Psoas muscle (tissue), 8 donors: ENCODE measurements at regions of chr2 and their contacts with region 1.

Region 1: DNA sequence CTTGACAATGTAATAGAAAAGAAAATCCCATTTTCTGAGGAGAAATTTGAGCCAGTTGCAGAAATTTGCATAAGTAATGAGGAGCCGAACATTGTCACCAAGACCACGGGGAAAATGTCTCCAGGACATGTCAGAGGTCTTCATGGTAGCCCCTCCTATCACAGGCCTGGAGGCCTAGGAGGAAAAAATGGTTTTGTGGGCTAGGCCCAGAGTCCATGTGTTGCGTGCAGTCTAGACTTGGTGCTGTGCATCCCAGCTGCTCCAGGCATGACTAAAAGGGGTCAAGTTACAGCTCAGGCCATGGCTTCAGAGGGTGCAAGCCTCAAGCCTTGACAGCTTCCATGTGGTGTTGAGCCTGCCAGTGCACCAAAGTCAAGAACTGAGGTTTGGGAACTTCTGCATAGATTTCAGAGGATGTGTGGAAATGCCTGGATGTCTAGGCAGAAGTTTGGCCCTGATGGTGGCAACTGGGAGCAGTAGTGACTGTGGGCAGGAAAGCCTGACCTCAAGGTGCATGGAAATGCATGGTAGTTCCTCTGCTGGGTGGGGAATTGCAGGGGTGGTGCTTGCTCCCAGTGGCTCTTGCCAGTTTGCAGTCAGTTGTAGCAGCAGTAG is 41.9 kb upstream of the CCDC195 start:
- DNase-seq: no peak
- ATAC-seq: no peak
- H3K4me3 ChIP-seq: no peak overlapping the region
- H3K27ac ChIP-seq: no peak overlapping the region
- H3K4me1 ChIP-seq: no peaks in the 10 kb centered on the region
- H3K27me3 ChIP-seq: no peaks in the 10 kb centered on the region
- CTCF ChIP-seq: no peak

Region 2: GRCh38 chr2:224731665-224732064 is 26.4 kb before region 1 on chr2:
- intact Hi-C with region 1: loop called in 1 of 2 experiments (anchors 1 kb)
- DNase-seq: no peak
- ATAC-seq: no peak
- H3K4me3 ChIP-seq: no peak overlapping the region
- H3K27ac ChIP-seq: no peak overlapping the region
- H3K4me1 ChIP-seq: no peaks in the 10 kb centered on the region
- H3K27me3 ChIP-seq: no peaks in the 10 kb centered on the region
- CTCF ChIP-seq: no peak

Region 3: DNA sequence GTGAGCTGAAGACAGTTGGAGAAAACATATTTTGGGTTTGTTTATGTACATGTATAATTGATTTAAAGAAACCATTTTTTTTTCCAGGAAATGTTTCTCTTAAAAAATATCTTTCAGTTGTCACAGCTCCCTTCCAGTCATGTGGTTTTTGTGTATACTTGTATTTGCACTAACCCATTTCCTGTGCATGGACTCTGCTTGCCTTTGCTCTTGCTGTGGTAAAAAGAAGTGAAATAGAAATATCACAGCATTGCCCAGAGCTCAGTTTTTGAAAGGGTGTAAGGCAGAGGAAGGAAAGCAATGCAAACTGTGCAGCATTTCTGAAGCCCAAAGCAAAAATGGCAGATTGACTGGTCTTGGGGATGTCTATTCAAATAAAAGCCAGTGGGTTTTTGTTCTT is 294.7 kb after region 1 on chr2:
- intact Hi-C with region 1: no loop called
- DNase-seq: no peak
- ATAC-seq: no peak
- H3K4me3 ChIP-seq: no peak overlapping the region
- H3K27ac ChIP-seq: no peak overlapping the region
- H3K4me1 ChIP-seq: no peaks in the 10 kb centered on the region
- H3K27me3 ChIP-seq: no peaks in the 10 kb centered on the region
- CTCF ChIP-seq: no peak